ENCODE measurements at regions of chr2 and their contacts with region 1.

Region 1: GRCh38 chr2:241598480-241598879 is 38.5 kb downstream of the THAP4 start:
- H3K4me3 ChIP-seq: no peak overlapping the region
- H3K27ac ChIP-seq: no peak overlapping the region
- H3K4me1 ChIP-seq: no peaks in the 10 kb centered on the region
- CTCF ChIP-seq: peak; percentile 38; the same call in 1 of the 2 replicates

Region 2: DNA sequence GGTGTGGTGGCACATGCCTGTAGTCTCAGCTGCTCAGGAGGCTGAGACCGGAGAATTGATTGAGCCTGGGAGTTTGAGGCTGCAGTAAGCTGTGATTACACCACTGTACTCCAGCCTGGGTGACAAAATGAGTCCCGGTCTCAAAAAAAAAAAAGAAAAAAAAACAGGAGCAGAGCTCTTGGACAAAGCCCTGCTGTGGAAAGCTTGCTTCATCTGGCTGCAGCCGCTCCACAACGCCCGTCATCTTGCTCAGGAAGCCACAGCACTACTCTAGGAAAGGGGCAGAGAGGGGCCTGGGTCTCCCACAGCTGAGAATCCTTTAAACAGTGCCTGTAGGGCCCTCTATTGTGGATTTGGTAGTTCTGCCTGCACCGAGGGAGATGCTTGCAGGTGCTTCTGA is 50.0 kb after region 1 on chr2:
- CTCF ChIA-PET with region 1: no interaction called
- POLR2A ChIA-PET with region 1: interaction called, 13 read pairs
- H3K4me3 ChIP-seq: no peak overlapping the region
- H3K27ac ChIP-seq: no peak overlapping the region
- H3K4me1 ChIP-seq: no peaks in the 10 kb centered on the region
- CTCF ChIP-seq: no peak

Measured in HEK293 (cell line).